ENCODE measurements at regions of chr11 and their contacts with region 1.

Region 1: DNA sequence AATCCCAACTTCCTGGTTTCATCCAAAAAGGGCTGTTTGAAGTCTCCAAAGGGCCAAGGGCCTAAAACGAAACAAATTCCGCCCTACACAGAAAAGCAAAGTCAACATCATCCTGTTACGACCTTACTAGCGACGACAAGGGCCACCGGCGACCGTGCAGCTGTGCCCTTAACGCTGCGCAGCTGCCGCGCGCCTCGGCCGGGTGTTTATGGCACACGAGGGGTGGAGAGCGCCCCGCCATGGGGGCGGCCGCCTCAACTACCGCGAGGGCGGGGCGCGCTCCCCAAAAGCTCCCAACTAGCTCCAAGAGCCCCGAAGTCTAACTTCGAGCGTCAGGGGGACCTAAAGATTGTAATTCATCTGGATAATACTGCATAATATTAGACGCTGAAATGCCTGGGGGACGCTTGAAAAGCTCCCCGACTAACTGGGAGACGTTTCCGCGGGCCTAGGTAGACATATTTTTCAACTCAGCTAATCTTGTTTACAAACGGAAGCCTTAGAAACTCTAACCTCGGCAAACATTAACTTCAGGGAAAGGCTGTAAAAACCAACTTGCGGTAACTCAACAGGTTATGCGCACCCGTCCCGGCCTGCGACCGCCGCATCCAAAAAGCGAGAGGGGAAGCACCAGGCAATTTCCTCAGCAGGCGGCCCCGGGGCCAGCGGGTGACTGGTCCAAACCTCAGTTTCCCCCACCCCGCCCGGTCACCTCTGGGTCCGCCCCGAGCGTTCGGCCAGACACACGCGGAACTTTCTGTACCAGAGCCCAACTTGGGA is 694 bp downstream of the TMEM123 start:
- DNase-seq: peak; percentile 94
- H3K4me3 ChIP-seq: peak overlapping the region; percentile 95
- H3K27ac ChIP-seq: peak overlapping the region; percentile 88
- H3K4me1 ChIP-seq: peaks cover 63% of the 10 kb centered on the region
- CTCF ChIP-seq: peak; percentile 71

Region 2: DNA sequence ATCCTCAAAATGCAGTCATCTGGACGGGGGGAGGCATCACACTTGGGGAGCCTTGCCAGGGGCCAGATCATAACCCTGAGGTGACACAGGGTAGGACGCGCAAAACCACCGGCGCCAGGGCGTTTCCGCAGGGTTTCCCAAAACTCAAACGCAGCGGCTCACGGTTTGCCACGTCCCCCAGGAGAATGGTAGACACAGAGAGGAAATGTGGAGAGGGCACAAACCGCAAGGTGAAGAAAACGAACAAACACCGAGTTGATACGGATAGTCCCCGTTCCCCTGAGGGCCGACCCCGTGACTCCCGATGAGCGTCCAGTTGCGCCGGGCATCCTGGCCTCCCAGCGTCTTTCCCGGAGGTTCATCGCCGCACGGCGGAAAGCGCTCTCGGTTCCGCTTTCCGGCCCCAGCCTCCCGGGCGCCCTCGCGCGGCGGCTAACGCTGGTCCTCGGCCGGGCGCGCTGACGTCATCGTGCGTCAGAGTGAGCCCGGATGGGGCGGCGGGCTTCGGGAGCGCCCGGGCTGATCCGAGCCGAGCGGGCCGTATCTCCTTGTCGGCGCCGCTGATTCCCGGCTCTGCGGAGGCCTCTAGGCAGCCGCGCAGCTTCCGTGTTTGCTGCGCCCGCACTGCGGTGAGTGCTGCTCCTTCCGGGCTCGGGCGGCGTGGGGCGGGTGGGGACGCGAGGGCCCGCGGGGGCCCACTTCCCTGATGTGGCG is 105.0 kb before region 1 on chr11 and contains the start of gene BIRC2:
- CTCF ChIA-PET with region 1: no interaction called
- POLR2A ChIA-PET with region 1: interaction called, 3 read pairs
- intact Hi-C with region 1: loop called (anchors 1 kb)
- DNase-seq: peak; percentile 95
- H3K4me3 ChIP-seq: peak within 1 kb of the TSS; percentile 76
- H3K27ac ChIP-seq: peak within 1 kb of the TSS; percentile 78
- H3K4me1 ChIP-seq: peaks cover 25% of the 10 kb centered on the region
- CTCF ChIP-seq: peak; percentile 75
- total RNA-seq, gene BIRC2: 32.6 and 38.0 TPM in 2 replicates

Region 3: DNA sequence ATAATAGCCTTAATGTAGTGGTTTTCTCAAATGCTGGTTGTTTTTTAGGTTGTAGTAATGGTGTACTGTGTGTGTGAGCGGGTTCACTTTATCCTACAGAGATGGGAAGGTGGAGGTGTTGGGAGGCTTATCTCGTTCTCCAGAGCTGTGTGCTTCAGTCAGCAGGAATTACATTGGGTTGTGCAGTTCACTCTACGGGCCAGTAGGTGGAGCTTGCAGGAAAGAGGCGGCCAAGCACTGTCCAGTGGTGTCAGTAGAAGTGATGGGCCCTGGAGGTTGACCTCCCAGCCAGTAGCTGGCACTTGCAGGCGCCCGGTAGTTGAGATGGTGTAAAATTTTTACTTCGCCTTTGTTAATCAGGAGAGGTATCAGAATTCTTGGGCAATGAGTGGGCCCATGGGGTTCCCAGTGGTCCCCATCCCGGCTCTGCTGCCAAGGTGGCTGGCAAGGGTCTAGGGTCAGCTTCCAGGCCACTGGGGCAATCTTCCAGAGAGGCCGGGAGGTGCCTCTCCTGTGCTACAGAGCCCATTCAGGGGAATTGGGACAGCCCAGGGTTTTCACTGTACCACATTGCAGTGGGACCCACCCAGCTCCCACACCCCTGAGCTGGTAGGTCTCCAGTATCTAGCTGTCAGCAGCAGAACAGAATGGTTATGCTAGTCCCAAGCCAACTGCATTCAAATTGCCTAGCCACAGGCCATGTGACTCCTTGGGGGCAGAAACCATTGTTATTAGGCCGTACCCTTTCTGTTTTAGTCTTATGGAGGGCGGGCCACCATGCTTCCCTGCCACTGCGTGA is 61.0 kb before region 1 on chr11:
- CTCF ChIA-PET with region 1: interaction called, 6 read pairs
- POLR2A ChIA-PET with region 1: interaction called, 6 read pairs
- intact Hi-C with region 1: loop called (anchors 1 kb)
- DNase-seq: peak; percentile 74
- H3K4me3 ChIP-seq: no peak overlapping the region
- H3K27ac ChIP-seq: no peak overlapping the region
- H3K4me1 ChIP-seq: peaks cover 28% of the 10 kb centered on the region
- CTCF ChIP-seq: peak; percentile 95

Region 4: DNA sequence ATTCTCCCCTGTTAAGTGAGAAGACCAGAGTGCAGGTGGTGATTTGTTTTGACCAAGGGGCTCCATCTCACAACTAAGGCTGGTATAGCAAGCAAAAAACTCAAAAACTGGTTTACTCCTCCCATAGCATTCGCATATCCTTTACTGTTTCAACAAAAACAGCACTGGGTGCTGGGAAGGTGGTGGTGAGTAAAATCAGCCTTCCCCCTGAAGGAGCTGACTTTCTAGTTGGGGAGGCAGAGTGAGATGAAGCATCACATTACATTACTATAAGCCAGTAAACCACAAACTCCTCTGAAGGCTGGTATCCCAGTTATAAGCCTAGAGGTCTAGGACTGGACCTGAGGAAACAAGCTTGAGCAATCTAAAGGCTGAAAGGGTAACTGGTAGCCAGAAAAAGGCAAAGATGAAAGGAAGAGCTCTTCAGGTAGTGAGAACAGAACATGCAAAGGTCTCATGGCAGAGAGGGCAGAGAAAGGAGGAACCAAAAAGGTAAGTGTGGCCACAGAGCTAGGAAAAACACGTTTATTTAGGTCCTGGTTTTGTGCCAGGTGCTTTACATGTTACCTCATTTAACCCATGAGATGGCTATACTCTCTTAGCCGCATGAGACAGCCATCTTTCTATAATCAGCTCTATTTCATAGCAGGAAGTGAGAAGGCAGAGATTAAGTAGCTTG is 21.6 kb before region 1 on chr11:
- CTCF ChIA-PET with region 1: interaction called, 5 read pairs
- POLR2A ChIA-PET with region 1: interaction called, 13 read pairs
- intact Hi-C with region 1: loop called (anchors 1 kb)
- DNase-seq: peak; percentile 95
- H3K4me3 ChIP-seq: peak overlapping the region; percentile 51
- H3K27ac ChIP-seq: peak overlapping the region; percentile 98
- H3K4me1 ChIP-seq: peaks cover 66% of the 10 kb centered on the region
- CTCF ChIP-seq: 0 out of 2 replicates have a peak, but pooled peaks have one; percentile 39

Region 5: GRCh38 chr11:102467056-102467708 is 15.3 kb after region 1 on chr11:
- CTCF ChIA-PET with region 1: no interaction called
- POLR2A ChIA-PET with region 1: interaction called, 14 read pairs
- intact Hi-C with region 1: no loop called
- DNase-seq: no peak
- H3K4me3 ChIP-seq: no peak overlapping the region
- H3K27ac ChIP-seq: no peak overlapping the region
- H3K4me1 ChIP-seq: peaks cover 74% of the 10 kb centered on the region
- CTCF ChIP-seq: no peak

Region 6: GRCh38 chr11:102476812-102477211 is 24.9 kb after region 1 on chr11:
- CTCF ChIA-PET with region 1: interaction called, 3 read pairs
- POLR2A ChIA-PET with region 1: interaction called, 9 read pairs
- intact Hi-C with region 1: loop called (anchors 1 kb)
- DNase-seq: peak; percentile 79
- H3K4me3 ChIP-seq: no peak overlapping the region
- H3K27ac ChIP-seq: peak overlapping the region; percentile 81
- H3K4me1 ChIP-seq: peaks cover 60% of the 10 kb centered on the region
- CTCF ChIP-seq: no peak

Region 7: GRCh38 chr11:102676084-102676483 is 224.2 kb after region 1 on chr11:
- CTCF ChIA-PET with region 1: no interaction called
- POLR2A ChIA-PET with region 1: no interaction called
- intact Hi-C with region 1: no loop called
- DNase-seq: no peak
- H3K4me3 ChIP-seq: no peak overlapping the region
- H3K27ac ChIP-seq: no peak overlapping the region
- H3K4me1 ChIP-seq: no peaks in the 10 kb centered on the region
- CTCF ChIP-seq: no peak

Measured in OCI-LY7 (cell line).